Endothelial cell of umbilical vein (primary cell): ENCODE measurements at regions of chr17 and their contacts with region 1.

Region 1: DNA sequence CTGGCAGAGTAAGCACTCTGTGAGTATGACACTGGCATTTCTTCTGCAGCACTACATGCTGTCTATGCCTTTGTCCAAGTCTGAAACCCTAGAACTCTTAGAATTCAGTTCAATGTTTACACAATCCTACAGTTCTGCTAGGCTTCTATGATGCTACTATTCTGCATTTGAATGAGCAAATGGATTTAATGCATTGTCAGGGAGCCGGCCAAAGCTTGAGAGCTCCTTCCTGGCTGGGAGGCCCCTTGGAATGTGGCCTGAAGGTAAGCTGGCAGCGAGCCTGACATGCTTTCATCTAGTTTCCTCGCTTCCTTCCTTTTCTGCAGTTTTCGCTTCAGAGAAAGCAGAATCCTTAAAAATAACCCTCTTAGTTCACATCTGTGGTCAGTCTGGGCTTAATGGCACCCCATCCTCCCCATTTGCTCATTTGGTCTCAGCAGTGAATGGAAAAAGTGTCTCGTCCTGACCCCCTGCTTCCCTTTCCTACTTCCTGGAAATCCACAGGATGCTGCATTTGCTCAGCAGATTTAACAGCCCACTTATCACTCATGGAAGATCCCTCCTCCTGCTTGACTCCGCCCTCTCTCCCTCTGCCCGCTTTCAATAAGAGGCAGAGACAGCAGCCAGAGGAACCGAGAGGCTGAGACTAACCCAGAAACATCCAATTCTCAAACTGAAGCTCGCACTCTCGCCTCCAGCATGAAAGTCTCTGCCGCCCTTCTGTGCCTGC is at the start of gene CCL2:
- DNase-seq: peak; percentile 92
- H3K4me3 ChIP-seq: peak within 1 kb of the TSS in 2 of 3 experiments; percentile 43 to 46
- H3K27ac ChIP-seq: peak within 1 kb of the TSS; percentile 96
- H3K4me1 ChIP-seq: peaks cover 78% of the 10 kb centered on the region
- H3K27me3 ChIP-seq: no peaks in the 10 kb centered on the region
- CTCF ChIP-seq: no peak
- POLR2A ChIP-seq: no peak
- total RNA-seq, gene CCL2: 160 and 238 TPM in 2 replicates

Region 2: DNA sequence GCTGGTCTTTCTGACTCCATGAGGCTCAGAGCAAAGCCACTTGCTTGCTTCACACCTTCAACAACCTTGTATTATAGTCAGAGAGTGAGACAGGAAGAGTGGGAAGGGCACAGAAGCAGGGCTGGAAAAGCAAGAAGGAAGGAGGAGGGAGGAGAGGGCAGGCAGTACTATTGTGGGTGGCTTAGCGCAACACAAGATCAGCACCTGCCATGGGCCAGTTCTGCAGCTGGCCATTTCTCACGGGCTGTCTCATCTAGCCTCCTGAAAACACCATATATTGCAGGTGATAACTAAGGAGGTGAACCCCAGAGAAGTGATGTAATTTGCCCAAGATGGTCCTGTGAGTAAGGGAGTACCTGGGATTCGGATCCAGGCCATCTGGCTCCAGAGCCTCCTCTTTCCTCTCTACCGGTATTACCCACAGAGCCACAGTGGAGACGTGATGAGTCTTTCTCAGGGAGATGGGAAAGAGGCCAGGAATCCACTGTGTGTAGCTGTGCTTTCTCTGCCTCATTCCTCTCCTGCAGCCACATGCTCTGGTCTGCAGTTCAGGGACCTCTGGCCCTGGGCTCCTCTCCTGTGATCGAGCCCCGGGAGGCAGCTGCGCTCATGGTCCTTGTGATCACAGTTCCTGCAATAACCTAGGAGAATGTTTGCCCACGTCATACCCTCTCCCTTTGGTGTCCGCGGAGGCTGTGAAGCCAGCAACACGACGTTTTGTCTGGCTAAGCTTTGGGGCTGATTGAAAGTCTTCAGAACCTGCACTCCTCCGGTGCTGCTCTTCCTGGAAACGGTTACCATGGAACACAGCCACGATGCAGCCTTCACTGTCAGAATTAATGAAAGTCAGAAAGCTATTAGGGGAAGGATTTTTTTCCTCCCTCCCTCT is 177.8 kb before region 1 on chr17:
- CTCF ChIA-PET with region 1: no interaction called
- POLR2A ChIA-PET with region 1: no interaction called
- dilution Hi-C with region 1: no loop called
- intact Hi-C with region 1: no loop called
- DNase-seq: no peak
- H3K4me3 ChIP-seq: no peak overlapping the region
- H3K27ac ChIP-seq: no peak overlapping the region
- H3K4me1 ChIP-seq: no peaks in the 10 kb centered on the region
- H3K27me3 ChIP-seq: no peaks in the 10 kb centered on the region
- CTCF ChIP-seq: no peak
- POLR2A ChIP-seq: no peak

Region 3: DNA sequence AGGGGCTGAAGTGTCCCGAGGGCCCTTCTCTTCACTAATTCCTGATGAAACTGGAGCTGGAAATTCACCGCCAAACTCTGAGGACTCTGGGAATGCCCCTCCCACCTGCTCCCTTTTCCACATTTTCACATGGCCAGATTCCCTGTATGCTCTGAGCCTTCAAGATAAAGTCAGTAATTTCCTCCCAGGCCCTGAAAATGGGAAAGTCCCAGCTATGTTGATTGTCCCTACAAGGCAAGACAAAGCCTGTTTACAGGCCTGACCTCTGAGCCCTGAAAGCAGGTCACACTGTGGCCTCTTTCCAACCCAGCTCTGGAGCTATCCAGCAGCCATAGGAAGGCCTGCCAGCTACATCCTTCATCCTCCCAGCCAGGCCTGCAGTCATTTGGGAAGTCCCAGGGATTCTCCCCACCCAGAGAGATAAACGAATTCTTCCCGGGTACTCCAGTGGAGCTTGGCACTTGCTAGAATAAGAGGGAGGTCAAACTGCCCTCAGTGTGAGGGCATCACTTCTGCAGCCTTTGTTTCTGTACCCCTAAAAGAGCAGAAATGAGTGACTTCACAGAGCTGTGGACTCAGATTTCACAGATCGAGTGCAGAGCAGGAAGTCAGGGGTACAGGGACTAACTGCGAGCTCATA is 19.3 kb before region 1 on chr17:
- CTCF ChIA-PET with region 1: interaction called, 6 read pairs
- POLR2A ChIA-PET with region 1: interaction called, 16 read pairs
- dilution Hi-C with region 1: no loop called
- intact Hi-C with region 1: loop called (anchors 1 kb)
- DNase-seq: peak; percentile 97
- H3K4me3 ChIP-seq: no peak overlapping the region
- H3K27ac ChIP-seq: peak overlapping the region; percentile 78
- H3K4me1 ChIP-seq: peaks cover 54% of the 10 kb centered on the region
- H3K27me3 ChIP-seq: no peaks in the 10 kb centered on the region
- CTCF ChIP-seq: no peak
- POLR2A ChIP-seq: no peak

Region 4: GRCh38 chr17:34300652-34301370 is 46.0 kb after region 1 on chr17:
- CTCF ChIA-PET with region 1: interaction called, 15 read pairs
- POLR2A ChIA-PET with region 1: no interaction called
- dilution Hi-C with region 1: no loop called
- intact Hi-C with region 1: loop called (anchors 1 kb)
- DNase-seq: peak; percentile 44
- H3K4me3 ChIP-seq: no peak overlapping the region
- H3K27ac ChIP-seq: no peak overlapping the region
- H3K4me1 ChIP-seq: peaks cover 7% of the 10 kb centered on the region
- H3K27me3 ChIP-seq: peaks cover 0 to 2% of the 10 kb centered on the region in 2 experiments
- CTCF ChIP-seq: no peak
- POLR2A ChIP-seq: no peak

Region 5: GRCh38 chr17:34386697-34387550 is 132.1 kb after region 1 on chr17:
- CTCF ChIA-PET with region 1: no interaction called
- POLR2A ChIA-PET with region 1: no interaction called
- dilution Hi-C with region 1: no loop called
- intact Hi-C with region 1: loop called (anchors 1 kb)
- DNase-seq: peak; percentile 53
- H3K4me3 ChIP-seq: no peak overlapping the region
- H3K27ac ChIP-seq: peak overlapping the region; percentile 72
- H3K4me1 ChIP-seq: peaks cover 46% of the 10 kb centered on the region
- H3K27me3 ChIP-seq: peaks cover 0 to 4% of the 10 kb centered on the region in 2 experiments
- CTCF ChIP-seq: no peak
- POLR2A ChIP-seq: no peak